Mammary epithelial cell (primary cell): ENCODE measurements at regions of chr2 and their contacts with region 1.

Region 1: GRCh38 chr2:28392297-28393113 is at the start of gene FOSL2:
- DNase-seq: peak; percentile 100
- H3K4me3 ChIP-seq: peak within 1 kb of the TSS; percentile 80 to 93 (median 83)
- H3K27ac ChIP-seq: peak within 1 kb of the TSS; percentile 95
- H3K4me1 ChIP-seq: peaks cover 36% of the 10 kb centered on the region
- H3K27me3 ChIP-seq: no peaks in the 10 kb centered on the region
- CTCF ChIP-seq: peak in 1 of 2 donors; percentile 6
- total RNA-seq, gene FOSL2: 89.9 to 92.9 TPM

Region 2: DNA sequence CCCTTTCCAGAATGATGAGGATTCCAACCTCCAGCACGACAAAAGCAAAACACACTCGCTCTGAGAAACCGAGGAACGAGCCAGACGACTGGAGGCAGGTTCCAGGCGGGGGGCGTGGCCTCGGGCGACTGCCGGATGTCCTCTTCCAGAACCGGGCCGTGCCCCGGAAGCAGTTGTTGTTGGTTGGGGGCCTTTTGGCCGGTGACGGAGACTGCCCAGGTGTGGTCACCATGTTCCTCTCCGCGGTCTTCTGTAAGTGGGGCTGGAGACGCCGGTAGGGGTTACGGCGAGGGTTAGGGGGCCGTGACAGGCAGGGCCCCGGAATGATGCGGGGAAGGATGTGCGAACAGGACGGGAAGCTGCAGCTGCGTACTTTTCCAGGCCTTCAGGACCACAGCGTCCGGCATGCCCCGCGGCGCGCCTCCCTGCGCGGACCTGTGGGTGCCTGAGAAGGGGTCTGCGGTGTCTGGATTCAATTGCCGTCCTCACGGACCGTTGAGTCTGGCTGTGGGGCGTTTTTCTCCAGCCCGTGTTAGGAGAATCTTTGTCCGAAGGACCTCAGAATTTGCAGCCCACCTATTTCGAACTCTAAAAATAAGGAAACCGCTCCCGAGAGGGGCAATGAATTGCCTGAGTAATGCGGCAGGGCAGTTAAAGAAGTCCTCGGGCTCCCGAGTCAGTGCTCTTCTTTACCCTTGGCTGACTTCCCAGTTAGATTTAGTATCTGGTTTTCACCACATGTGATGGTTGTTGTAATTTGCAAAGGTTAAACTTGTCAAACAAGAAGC is 620.8 kb before region 1 on chr2 and contains the start of gene MRPL33:
- CTCF ChIA-PET with region 1: interaction called, 4 read pairs
- dilution Hi-C with region 1: no loop called
- in situ Hi-C with region 1: loop called in 1 of 2 experiments (anchors 25 kb)
- intact Hi-C with region 1: no loop called
- DNase-seq: peak; percentile 88
- H3K4me3 ChIP-seq: peak within 1 kb of the TSS; percentile 76 to 93 (median 91)
- H3K27ac ChIP-seq: peak within 1 kb of the TSS; percentile 78
- H3K4me1 ChIP-seq: peaks cover 24% of the 10 kb centered on the region
- H3K27me3 ChIP-seq: no peaks in the 10 kb centered on the region
- CTCF ChIP-seq: no peak
- total RNA-seq, gene MRPL33: 40.2 to 83.6 TPM

Region 3: DNA sequence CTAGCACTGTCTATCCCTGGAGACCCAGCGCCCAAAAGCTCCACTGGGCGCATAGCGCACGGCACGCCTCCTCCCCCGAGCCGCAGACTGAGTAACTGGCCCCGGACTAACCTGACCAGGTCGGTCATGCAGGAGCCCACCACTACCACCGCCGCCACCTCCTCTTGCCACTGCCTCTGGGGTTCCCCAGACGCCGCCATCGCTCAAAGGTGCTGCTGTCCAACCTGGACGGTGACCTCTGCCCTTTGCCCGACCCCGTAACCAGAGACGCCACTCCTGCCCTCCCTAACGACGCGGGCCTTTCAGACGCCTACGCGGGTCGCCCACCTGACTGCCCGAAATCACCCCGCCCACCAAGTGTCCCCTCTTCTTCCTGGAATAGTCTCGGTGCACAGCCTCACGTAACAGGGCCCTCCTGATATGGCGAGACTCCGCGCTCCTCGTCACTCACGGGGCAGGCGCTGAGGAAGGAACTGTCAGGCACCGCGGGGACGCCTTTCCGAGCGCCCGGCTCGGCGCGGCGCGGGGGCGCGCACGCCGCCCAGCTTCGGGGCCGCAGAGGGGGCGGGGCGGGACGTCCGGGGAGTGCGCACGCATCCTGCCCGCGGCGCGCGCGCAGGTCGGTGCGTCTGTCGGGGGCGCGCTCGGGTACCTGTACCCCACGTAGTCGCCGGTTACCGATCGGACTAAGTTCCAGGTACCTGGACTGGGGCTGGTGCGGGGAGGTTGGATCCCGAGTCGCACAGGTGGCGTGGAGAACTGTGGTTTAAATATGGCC is 502.2 kb before region 1 on chr2 and contains the starts of genes BABAM2 and RBKS:
- CTCF ChIA-PET with region 1: interaction called, 4 read pairs
- dilution Hi-C with region 1: no loop called
- in situ Hi-C with region 1: no loop called
- intact Hi-C with region 1: loop called (anchors 1 kb)
- DNase-seq: peak; percentile 84
- H3K4me3 ChIP-seq: peak within 1 kb of the TSS; percentile 60 to 76 (median 74)
- H3K27ac ChIP-seq: peak within 1 kb of the TSS; percentile 90
- H3K4me1 ChIP-seq: peaks cover 21% of the 10 kb centered on the region
- H3K27me3 ChIP-seq: no peaks in the 10 kb centered on the region
- CTCF ChIP-seq: no peak
- total RNA-seq, gene BABAM2: 27.9 to 35.0 TPM
- total RNA-seq, gene RBKS: 1.1 to 3.8 TPM

Region 4: DNA sequence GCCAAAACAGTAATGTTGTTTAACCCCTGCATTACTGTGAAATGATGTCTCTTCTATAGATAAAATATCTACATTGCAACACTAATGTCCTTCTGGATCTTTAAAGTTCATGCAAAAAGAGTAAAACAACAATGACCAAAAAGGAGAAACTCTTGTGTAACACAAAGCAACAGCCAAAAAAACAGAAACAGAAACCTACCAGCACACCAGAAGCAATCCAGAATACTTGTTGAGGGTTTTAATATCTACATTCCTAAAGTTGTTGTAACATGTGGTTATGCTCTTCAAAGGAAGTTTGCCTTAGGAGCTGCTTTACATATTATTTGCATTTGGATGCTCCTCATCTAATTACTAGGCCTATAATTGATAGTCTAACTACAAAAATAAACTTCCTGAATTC is 344.8 kb before region 1 on chr2:
- CTCF ChIA-PET with region 1: no interaction called
- dilution Hi-C with region 1: no loop called
- in situ Hi-C with region 1: no loop called
- intact Hi-C with region 1: loop called (anchors 1 kb)
- DNase-seq: peak; percentile 64
- H3K4me3 ChIP-seq: no peak overlapping the region
- H3K27ac ChIP-seq: no peak overlapping the region
- H3K4me1 ChIP-seq: peaks cover 18% of the 10 kb centered on the region
- H3K27me3 ChIP-seq: no peaks in the 10 kb centered on the region
- CTCF ChIP-seq: no peak

Region 5: DNA sequence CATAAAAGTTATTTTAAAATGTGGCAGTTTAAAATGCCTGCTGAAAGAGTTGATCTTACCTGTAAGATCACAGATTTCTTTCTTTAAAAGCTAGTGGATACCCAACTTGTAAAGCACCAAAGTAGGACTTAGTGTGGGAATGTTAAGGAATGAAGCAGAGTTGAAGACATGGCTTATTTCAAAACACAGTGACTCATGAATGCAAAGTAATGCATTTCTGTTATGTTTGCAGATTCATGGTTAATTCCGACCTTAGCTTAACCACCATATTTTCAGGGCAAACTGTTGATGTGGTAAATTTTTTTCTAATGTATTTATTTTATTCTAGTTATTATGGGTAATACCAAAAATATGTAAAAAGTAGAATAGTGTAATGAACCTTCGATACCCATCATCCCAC is 206.6 kb before region 1 on chr2:
- CTCF ChIA-PET with region 1: no interaction called
- dilution Hi-C with region 1: no loop called
- in situ Hi-C with region 1: loop called in 1 of 2 experiments (anchors 10 kb)
- intact Hi-C with region 1: no loop called
- DNase-seq: peak; percentile 70
- H3K4me3 ChIP-seq: no peak overlapping the region
- H3K27ac ChIP-seq: peak overlapping the region; percentile 93
- H3K4me1 ChIP-seq: peaks cover 17% of the 10 kb centered on the region
- H3K27me3 ChIP-seq: no peaks in the 10 kb centered on the region
- CTCF ChIP-seq: no peak

Region 6: GRCh38 chr2:28276076-28276618 is 116.4 kb before region 1 on chr2:
- CTCF ChIA-PET with region 1: no interaction called
- dilution Hi-C with region 1: no loop called
- in situ Hi-C with region 1: no loop called
- intact Hi-C with region 1: loop called (anchors 1 kb)
- DNase-seq: peak; percentile 98
- H3K4me3 ChIP-seq: no peak overlapping the region
- H3K27ac ChIP-seq: peak overlapping the region; percentile 90
- H3K4me1 ChIP-seq: peaks cover 34% of the 10 kb centered on the region
- H3K27me3 ChIP-seq: no peaks in the 10 kb centered on the region
- CTCF ChIP-seq: no peak

Region 7: GRCh38 chr2:28452534-28453081 is 60.1 kb after region 1 on chr2:
- CTCF ChIA-PET with region 1: no interaction called
- dilution Hi-C with region 1: no loop called
- in situ Hi-C with region 1: no loop called
- intact Hi-C with region 1: loop called (anchors 2 kb)
- DNase-seq: no peak
- H3K4me3 ChIP-seq: no peak overlapping the region
- H3K27ac ChIP-seq: no peak overlapping the region
- H3K4me1 ChIP-seq: peaks cover 52% of the 10 kb centered on the region
- H3K27me3 ChIP-seq: no peaks in the 10 kb centered on the region
- CTCF ChIP-seq: peak; percentile 98 to 99

Region 8: DNA sequence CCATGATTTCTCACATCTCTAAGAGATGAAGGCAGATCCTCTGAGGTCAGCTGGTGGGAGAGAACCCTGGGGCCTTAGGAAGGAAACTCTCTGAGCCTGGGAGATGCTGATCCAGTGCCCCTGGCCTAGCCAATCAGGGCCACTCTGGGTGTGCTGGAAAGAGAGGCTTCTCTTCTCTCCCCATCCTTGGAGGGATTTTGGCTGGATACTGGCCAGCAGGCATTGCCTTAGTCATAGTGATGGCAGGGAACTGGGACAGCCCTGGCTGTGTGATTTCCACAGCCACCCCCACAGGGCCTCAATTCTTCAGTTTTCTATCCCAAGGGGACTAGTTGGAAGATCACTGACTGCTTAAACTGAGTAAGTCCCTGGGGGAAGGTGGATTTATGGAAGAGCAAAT is 76.8 kb after region 1 on chr2:
- CTCF ChIA-PET with region 1: no interaction called
- dilution Hi-C with region 1: no loop called
- in situ Hi-C with region 1: no loop called
- intact Hi-C with region 1: no loop called
- DNase-seq: no peak
- H3K4me3 ChIP-seq: no peak overlapping the region
- H3K27ac ChIP-seq: no peak overlapping the region
- H3K4me1 ChIP-seq: peaks cover 24% of the 10 kb centered on the region
- H3K27me3 ChIP-seq: no peaks in the 10 kb centered on the region
- CTCF ChIP-seq: no peak